Mammary epithelial cell (primary cell): ENCODE measurements at regions of chr6 and their contacts with region 1.

Region 1: GRCh38 chr6:446418-447366 is 55.1 kb downstream of the IRF4 start:
- DNase-seq: no peak
- H3K4me3 ChIP-seq: no peak overlapping the region
- H3K27ac ChIP-seq: no peak overlapping the region
- H3K4me1 ChIP-seq: no peaks in the 10 kb centered on the region
- H3K27me3 ChIP-seq: no peaks in the 10 kb centered on the region
- CTCF ChIP-seq: no peak

Region 2: DNA sequence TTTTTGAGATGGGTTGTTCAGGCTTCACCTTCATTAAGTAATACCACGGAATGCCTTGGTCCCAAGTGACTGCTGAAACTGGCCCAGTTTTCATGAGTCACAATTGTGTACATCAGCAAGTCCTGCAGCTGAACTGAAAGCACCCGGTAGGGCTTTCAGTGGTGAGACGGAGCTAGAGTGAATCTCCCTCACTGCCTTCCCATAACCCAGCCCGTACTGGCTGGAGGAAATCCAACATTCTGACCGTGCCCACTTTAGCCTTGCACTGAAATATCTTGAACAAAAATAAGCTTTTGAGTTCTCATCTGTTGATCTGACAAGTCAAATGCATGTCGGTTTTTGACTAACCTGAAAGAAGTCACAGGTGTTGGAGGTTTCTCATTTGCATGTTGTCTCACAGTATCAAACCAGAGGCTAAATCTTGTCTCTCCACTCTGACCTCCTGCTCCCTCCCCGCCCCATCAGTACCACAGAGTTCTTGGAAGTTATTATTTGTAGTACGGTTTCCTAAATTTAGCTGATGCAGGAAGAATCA is 118.5 kb before region 1 on chr6:
- CTCF ChIA-PET with region 1: no interaction called
- dilution Hi-C with region 1: no loop called
- in situ Hi-C with region 1: no loop called
- intact Hi-C with region 1: no loop called
- DNase-seq: peak; percentile 84
- H3K4me3 ChIP-seq: no peak overlapping the region
- H3K27ac ChIP-seq: no peak overlapping the region
- H3K4me1 ChIP-seq: peaks cover 9% of the 10 kb centered on the region
- H3K27me3 ChIP-seq: no peaks in the 10 kb centered on the region
- CTCF ChIP-seq: no peak

Region 3: DNA sequence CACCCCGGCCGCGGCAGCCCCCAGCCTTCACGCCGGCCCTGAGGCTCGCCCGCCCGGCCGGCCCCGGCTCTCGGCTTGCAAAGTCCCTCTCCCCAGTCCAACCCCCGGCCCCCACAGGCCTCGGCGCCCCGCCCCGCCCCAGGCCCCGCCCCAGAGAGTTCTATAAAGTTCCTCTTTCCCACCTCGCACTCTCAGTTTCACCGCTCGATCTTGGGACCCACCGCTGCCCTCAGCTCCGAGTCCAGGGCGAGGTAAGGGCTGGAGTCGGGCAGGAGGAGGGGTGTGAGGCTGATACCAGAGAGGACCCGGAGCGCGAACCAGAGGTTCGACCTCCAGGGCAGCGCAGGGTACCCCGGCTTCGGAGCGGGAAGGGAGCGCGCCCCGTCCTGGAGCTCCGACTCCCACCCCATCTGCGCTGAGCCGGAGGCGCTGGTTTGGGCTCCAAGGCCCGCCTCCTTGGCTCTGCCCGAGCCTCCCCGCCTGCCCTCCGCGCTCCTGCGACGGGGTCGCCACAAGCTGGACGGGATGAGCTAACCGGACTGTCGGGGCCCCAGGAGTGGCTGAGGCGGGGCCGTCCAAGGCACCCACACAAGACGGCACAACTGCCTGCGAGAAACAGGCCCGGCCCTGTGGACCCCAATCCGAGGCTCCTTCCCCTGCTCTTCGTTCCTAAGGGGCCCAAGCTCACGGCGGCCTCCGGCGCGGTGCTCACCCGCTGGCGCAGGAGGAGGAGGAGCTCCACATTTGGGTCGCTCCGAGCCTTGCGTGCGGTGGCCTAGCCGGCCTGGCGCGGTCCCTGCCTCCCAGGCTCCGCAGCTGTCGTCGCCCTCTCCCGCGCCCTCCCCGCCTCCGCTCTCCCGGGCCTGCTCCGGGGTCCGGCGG is 54.9 kb before region 1 on chr6 and contains the start of gene IRF4:
- CTCF ChIA-PET with region 1: no interaction called
- dilution Hi-C with region 1: loop called (anchors 5 kb)
- in situ Hi-C with region 1: no loop called
- intact Hi-C with region 1: no loop called
- DNase-seq: no peak
- H3K4me3 ChIP-seq: no peak within 1 kb of the TSS
- H3K27ac ChIP-seq: no peak within 1 kb of the TSS
- H3K4me1 ChIP-seq: peaks cover 16% of the 10 kb centered on the region
- H3K27me3 ChIP-seq: peaks cover 48% of the 10 kb centered on the region
- CTCF ChIP-seq: no peak
- total RNA-seq, gene IRF4: not detected

Region 4: DNA sequence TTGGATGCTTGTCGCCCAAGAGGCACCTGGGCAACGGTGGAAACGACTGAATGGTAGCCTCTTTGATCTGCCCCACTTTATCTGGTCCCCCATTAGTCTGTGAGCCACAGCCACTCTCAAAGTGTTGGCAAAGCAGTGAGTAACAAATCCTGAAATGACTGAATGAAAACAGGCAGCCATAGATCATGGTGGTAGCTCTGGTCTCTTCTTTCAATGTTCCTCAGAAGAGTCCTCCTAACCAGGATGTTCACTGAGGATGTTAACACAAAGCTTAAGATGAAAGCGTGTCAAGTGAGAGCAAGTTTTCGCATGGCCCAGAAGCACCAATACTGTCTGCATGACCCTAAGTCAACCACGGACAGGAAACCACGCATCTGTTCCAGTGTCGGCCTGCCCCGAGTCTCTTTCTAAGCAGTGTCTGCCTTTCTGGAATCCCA is 52.1 kb after region 1 on chr6:
- CTCF ChIA-PET with region 1: no interaction called
- dilution Hi-C with region 1: loop called (anchors 5 kb)
- in situ Hi-C with region 1: no loop called
- intact Hi-C with region 1: no loop called
- DNase-seq: no peak
- H3K4me3 ChIP-seq: no peak overlapping the region
- H3K27ac ChIP-seq: no peak overlapping the region
- H3K4me1 ChIP-seq: no peaks in the 10 kb centered on the region
- H3K27me3 ChIP-seq: no peaks in the 10 kb centered on the region
- CTCF ChIP-seq: no peak